Calu3 (cell line): ENCODE measurements at regions of chr6 and their contacts with region 1.

Region 1: GRCh38 chr6:32529697-32530429 is at the start of gene HLA-DRB5:
- DNase-seq: peak; percentile 53
- H3K4me3 Mint-ChIP-seq: peak within 1 kb of the TSS; percentile 68
- H3K27ac Mint-ChIP-seq: no peak within 1 kb of the TSS
- H3K4me1 Mint-ChIP-seq: no peaks in the 10 kb centered on the region
- H3K27me3 Mint-ChIP-seq: peaks cover 15% of the 10 kb centered on the region
- CTCF ChIP-seq: no peak
- total RNA-seq, gene HLA-DRB5: 13.7 and 16.1 TPM in 2 replicates

Region 2: DNA sequence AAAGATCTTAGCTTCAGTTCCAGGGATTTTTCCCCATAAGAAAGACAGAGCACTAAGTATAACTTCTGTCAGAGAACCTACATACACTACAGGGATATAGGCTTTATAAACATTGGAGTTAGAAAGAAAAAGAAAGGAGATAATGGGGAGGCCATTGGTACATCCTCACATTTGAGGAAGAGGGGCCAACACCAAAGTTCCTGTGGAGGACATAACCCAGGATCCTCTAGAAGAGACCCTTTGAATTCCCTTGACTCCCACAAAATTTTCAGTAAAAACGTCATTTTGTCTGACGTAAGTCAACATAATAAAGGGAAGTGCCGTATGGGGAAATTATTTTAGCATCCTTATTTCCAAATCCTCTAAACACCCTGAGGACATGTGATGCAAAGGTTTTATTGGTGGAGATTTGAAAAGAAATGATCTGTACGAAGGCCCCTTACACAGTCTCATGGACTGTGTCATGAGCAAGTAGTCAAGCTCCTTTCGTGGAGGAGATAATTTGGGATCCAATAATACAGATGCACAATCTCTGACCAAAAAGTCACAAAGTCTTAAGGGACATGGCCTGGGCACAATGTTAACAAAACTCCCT is 57.0 kb before region 1 on chr6:
- CTCF ChIA-PET with region 1: no interaction called
- intact Hi-C with region 1: loop called (anchors 2 kb)
- DNase-seq: no peak
- H3K4me3 Mint-ChIP-seq: no peak overlapping the region
- H3K27ac Mint-ChIP-seq: no peak overlapping the region
- H3K4me1 Mint-ChIP-seq: peaks cover 7% of the 10 kb centered on the region
- H3K27me3 Mint-ChIP-seq: peaks cover 65% of the 10 kb centered on the region
- CTCF ChIP-seq: no peak

Region 3: DNA sequence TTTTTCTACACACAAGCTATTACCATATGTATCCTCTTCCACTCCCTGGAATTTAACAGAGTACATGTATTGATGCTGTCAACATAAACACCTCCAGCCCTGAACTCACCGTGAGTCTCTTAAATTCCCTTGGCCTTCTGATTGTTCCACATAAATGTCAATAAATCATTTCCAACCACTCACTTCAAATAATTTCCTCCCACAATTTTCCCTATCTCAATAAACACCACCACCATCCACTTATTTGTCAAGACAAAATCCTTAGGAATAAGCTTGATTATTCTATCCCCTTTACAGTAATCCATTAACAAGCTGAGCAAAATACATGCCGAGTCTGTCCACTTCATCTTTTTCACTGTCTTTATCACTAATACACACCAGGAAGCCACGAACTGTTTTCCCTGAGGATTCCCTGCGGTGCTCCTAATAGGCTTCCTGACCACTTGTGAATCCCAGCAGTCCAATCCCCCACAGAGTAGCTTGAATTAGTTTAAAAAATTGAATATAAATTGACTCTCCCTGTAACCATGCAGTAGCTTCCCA is 40.6 kb after region 1 on chr6:
- CTCF ChIA-PET with region 1: no interaction called
- intact Hi-C with region 1: loop called (anchors 5 kb)
- DNase-seq: no peak
- H3K4me3 Mint-ChIP-seq: no peak overlapping the region
- H3K27ac Mint-ChIP-seq: no peak overlapping the region
- H3K4me1 Mint-ChIP-seq: no peaks in the 10 kb centered on the region
- H3K27me3 Mint-ChIP-seq: peaks cover 21% of the 10 kb centered on the region
- CTCF ChIP-seq: no peak

Region 4: GRCh38 chr6:32589598-32590449 is 60.0 kb after region 1 on chr6 and contains the start of gene HLA-DRB1:
- CTCF ChIA-PET with region 1: interaction called, 5 read pairs
- intact Hi-C with region 1: loop called (anchors 2 kb)
- DNase-seq: peak; percentile 54
- H3K4me3 Mint-ChIP-seq: peak within 1 kb of the TSS; percentile 56
- H3K27ac Mint-ChIP-seq: peak within 1 kb of the TSS; percentile 22
- H3K4me1 Mint-ChIP-seq: peaks cover 12% of the 10 kb centered on the region
- H3K27me3 Mint-ChIP-seq: peaks cover 14% of the 10 kb centered on the region
- CTCF ChIP-seq: no peak
- total RNA-seq, gene HLA-DRB1: 111 and 141 TPM in 2 replicates

Region 5: GRCh38 chr6:32718879-32719278 is 189.0 kb after region 1 on chr6:
- CTCF ChIA-PET with region 1: no interaction called
- intact Hi-C with region 1: no loop called
- DNase-seq: no peak
- H3K4me3 Mint-ChIP-seq: no peak overlapping the region
- H3K27ac Mint-ChIP-seq: no peak overlapping the region
- H3K4me1 Mint-ChIP-seq: no peaks in the 10 kb centered on the region
- H3K27me3 Mint-ChIP-seq: peaks cover 79% of the 10 kb centered on the region
- CTCF ChIP-seq: no peak